ENCODE measurements at regions of chr2 and their contacts with region 1.

Region 1: DNA sequence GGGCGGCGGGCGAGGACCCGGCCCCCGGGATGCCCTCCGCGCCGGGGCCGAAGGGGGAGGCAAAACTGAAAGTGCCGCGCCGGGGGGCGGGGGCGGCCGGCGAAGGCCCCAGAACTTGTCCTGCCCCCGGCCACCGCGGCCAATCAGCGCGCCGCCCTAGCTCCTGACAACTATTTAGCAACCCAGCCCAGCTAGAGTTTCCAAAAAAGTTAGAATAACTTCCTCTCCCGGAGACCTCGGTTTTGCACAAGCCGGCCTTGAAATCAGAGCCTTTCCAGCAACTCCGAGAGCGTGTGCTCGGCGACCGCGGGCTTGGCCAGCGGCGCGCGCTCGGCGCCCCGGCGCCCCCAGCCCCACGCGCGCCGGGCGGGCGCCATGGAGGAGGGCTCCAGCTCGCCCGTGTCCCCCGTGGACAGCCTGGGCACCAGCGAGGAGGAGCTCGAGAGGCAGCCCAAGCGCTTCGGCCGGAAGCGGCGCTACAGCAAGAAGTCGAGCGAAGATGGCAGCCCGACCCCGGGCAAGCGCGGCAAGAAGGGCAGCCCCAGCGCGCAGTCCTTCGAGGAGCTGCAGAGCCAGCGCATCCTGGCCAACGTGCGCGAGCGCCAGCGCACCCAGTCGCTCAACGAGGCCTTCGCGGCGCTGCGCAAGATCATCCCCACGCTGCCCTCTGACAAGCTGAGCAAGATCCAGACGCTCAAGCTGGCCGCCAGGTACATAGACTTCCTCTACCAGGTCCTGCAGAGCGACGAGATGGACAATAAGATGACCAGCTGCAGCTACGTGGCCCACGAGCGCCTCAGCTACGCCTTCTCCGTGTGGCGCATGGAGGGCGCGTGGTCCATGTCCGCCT is at the start of gene TWIST2:
- DNase-seq: peak; percentile 82
- H3K4me3 ChIP-seq: peak within 1 kb of the TSS; percentile 60 to 81
- H3K27ac ChIP-seq: peak within 1 kb of the TSS; percentile 72 to 84
- H3K4me1 ChIP-seq: no peaks in the 10 kb centered on the region
- H3K27me3 ChIP-seq: no peaks in the 10 kb centered on the region
- CTCF ChIP-seq: no peak
- POLR2A ChIP-seq: peak; percentile 13
- total RNA-seq, gene TWIST2: 10.3 to 11.3 TPM

Region 2: GRCh38 chr2:238938401-238939055 is 90.5 kb after region 1 on chr2:
- intact Hi-C with region 1: loop called (anchors 10 kb)
- DNase-seq: peak; percentile 90
- H3K4me3 ChIP-seq: no peak overlapping the region
- H3K27ac ChIP-seq: no peak overlapping the region
- H3K4me1 ChIP-seq: peaks cover 6% of the 10 kb centered on the region
- H3K27me3 ChIP-seq: no peaks in the 10 kb centered on the region
- CTCF ChIP-seq: no peak
- POLR2A ChIP-seq: no peak